Natural killer cell (primary cell): ENCODE measurements at regions of chrX and their contacts with region 1.

Region 1: GRCh38 chrX:110156167-110156754 is 153.3 kb downstream of the TMEM164 start:
- DNase-seq: peak in 1 of 2 donors; percentile 47
- ATAC-seq: no peak
- H3K4me3 ChIP-seq: no peak overlapping the region
- H3K4me3 Mint-ChIP-seq: no peak overlapping the region
- H3K27ac ChIP-seq: no peak overlapping the region
- H3K27ac Mint-ChIP-seq: no peak overlapping the region
- H3K4me1 ChIP-seq: no peaks in the 10 kb centered on the region
- H3K4me1 Mint-ChIP-seq: peaks cover 0 to 15% of the 10 kb centered on the region in 2 donors
- H3K27me3 ChIP-seq: no peaks in the 10 kb centered on the region
- H3K27me3 Mint-ChIP-seq: no peaks in the 10 kb centered on the region
- CTCF ChIP-seq: peak; percentile 58

Region 2: GRCh38 chrX:110407910-110408545 is 251.8 kb after region 1 on chrX:
- intact Hi-C with region 1: loop called (anchors 1 kb)
- DNase-seq: peak in 1 of 2 donors; percentile 75
- ATAC-seq: peak in 2 of 3 donors; percentile 36 to 65
- H3K4me3 ChIP-seq: no peak overlapping the region
- H3K4me3 Mint-ChIP-seq: no peak overlapping the region
- H3K27ac ChIP-seq: no peak overlapping the region
- H3K27ac Mint-ChIP-seq: no peak overlapping the region
- H3K4me1 ChIP-seq: peaks cover 2% of the 10 kb centered on the region
- H3K4me1 Mint-ChIP-seq: peaks cover 0 to 2% of the 10 kb centered on the region in 2 donors
- H3K27me3 ChIP-seq: no peaks in the 10 kb centered on the region
- H3K27me3 Mint-ChIP-seq: peaks cover 2 to 38% of the 10 kb centered on the region in 2 donors
- CTCF ChIP-seq: peak; percentile 60